SK-N-SH (cell line): ENCODE measurements at regions of chr5 and their contacts with region 1.

Region 1: DNA sequence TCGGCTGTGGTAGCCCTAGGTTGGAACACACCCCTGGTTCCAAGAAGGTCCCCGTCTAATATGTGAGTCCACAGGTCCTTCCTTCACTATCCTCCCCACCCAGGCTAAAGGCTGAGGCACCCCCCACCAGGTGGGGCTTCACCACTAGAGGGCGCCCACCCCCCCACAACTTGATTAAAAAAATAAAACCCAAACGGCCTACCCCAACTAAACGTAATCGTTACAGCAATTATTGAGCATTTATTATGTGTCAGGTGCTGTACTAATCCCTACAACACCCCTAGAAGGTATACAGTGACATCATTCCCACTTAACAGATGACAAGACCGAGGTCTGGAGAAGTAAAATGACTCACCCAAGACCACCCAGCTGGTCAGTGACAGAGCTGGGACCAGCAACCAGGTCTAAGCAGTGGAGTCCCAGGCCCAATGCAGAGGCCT is 65.0 kb downstream of the FGF18 start:
- DNase-seq: peak; percentile 82
- H3K4me3 ChIP-seq: no peak overlapping the region
- H3K27ac ChIP-seq: no peak overlapping the region
- H3K4me1 ChIP-seq: no peaks in the 10 kb centered on the region
- H3K27me3 ChIP-seq: no peaks in the 10 kb centered on the region
- CTCF ChIP-seq: peak; percentile 87
- EP300 ChIP-seq: no peak
- RAD21 ChIP-seq: peak; percentile 60

Region 2: GRCh38 chr5:171470420-171470819 is 14.1 kb before region 1 on chr5:
- CTCF ChIA-PET with region 1: interaction called, 10 read pairs
- POLR2A ChIA-PET with region 1: no interaction called
- DNase-seq: no peak
- H3K4me3 ChIP-seq: no peak overlapping the region
- H3K27ac ChIP-seq: no peak overlapping the region
- H3K4me1 ChIP-seq: no peaks in the 10 kb centered on the region
- H3K27me3 ChIP-seq: no peaks in the 10 kb centered on the region
- CTCF ChIP-seq: no peak
- EP300 ChIP-seq: no peak
- RAD21 ChIP-seq: no peak

Region 3: DNA sequence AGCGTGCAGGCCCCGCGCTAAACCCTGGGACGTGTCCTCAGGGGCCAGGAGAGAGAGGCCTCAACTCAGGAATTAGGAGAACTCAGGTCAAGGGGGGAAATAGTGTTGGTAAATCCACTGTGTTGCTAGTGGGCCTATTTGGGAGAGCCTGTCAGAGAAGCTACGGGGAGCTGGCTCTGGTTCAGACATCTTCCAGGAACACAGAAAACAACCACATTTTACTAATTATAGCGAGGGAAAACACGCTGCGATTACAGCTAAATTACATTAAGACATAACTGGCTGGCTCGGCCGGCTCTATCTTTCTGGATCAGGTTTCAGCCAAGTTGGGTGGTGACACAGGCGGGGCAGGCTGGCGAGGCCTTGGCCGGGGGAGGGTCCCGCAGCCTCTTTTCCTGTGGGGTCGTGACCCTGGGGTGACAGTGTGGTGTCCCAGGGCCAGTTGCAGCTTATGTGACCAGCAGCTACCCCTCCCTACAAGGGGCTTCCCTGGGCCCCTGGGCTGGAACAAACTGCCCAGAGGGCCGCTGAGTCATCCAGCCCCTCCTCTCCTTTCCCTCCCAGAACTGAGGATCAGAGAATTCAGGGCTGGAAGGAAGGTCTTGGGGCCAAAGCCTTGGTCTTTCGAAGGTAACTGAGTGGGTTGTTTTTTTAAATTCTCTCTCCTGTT is 10.1 kb after region 1 on chr5:
- CTCF ChIA-PET with region 1: interaction called, 19 read pairs
- POLR2A ChIA-PET with region 1: no interaction called
- DNase-seq: peak; percentile 86
- H3K4me3 ChIP-seq: 0 out of 4 replicates have a peak overlapping the region, but pooled peaks of 1 of the 2 experiments have one; percentile 4
- H3K27ac ChIP-seq: peak overlapping the region; percentile 84 to 87
- H3K4me1 ChIP-seq: peaks cover 19 to 43% of the 10 kb centered on the region in 2 experiments; a peak in 3 of 4 replicates
- H3K27me3 ChIP-seq: no peaks in the 10 kb centered on the region
- CTCF ChIP-seq: no peak
- EP300 ChIP-seq: peak; percentile 61 to 95; a peak in 3 of 4 replicates
- RAD21 ChIP-seq: peak; percentile 23; the same call in 1 of the 2 replicates